MCF 10A (cell line): ENCODE measurements at regions of chr2 and their contacts with region 1.

Region 1: GRCh38 chr2:98835831-98836385 is 100.1 kb downstream of the CRACDL start:
- DNase-seq: no peak
- H3K4me3 Mint-ChIP-seq: no peak overlapping the region
- H3K27ac Mint-ChIP-seq: no peak overlapping the region
- H3K4me1 Mint-ChIP-seq: peaks cover 10% of the 10 kb centered on the region
- H3K27me3 Mint-ChIP-seq: no peaks in the 10 kb centered on the region
- CTCF ChIP-seq: no peak

Region 2: DNA sequence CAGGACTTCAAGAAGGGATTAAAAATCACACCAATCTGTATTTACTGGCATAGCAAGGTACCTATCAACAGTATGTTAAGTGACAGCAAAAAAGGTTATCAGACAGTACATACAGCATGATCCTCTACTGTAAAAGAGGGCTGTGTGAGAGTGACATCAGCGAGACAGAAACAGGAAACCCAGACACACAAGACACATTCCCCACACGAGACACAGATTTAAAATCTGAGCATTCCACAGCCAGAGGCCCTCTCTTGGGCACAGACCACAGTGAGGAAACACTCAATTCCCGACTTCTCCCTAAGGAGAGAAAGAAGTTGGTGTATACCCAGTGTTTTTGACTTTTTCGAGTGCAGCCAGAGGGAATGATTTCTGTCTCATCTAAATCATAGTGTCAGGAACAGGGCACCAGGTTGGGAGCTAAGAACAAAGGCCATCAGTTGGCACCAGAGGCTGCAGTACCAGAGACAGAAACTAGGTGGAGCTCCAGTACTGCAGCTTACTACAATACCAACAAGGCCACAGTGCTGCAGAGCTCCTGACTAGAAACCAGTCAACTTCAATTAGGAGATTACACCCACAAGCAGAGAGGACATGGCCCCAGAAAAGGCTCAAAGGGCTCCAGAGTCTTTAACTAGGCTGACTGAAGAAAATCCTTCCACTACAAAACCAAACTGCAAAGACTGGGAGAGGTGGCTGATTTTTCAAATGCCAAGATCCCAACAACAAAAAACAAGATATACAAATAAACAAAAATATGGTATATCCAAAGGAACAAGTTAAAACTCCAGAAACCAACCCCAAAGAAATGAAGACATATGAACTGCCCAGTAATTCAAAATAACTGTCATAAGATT is 186.5 kb before region 1 on chr2:
- CTCF ChIA-PET with region 1: interaction called, 17 read pairs
- POLR2A ChIA-PET with region 1: interaction called, 4 read pairs
- intact Hi-C with region 1: loop called (anchors 1 kb)
- DNase-seq: peak; percentile 80
- H3K4me3 Mint-ChIP-seq: no peak overlapping the region
- H3K27ac Mint-ChIP-seq: no peak overlapping the region
- H3K4me1 Mint-ChIP-seq: no peaks in the 10 kb centered on the region
- H3K27me3 Mint-ChIP-seq: no peaks in the 10 kb centered on the region
- CTCF ChIP-seq: peak; percentile 97

Region 3: GRCh38 chr2:98656800-98657199 is 179.1 kb before region 1 on chr2:
- CTCF ChIA-PET with region 1: interaction called, 10 read pairs
- POLR2A ChIA-PET with region 1: no interaction called
- intact Hi-C with region 1: no loop called
- DNase-seq: no peak
- H3K4me3 Mint-ChIP-seq: no peak overlapping the region
- H3K27ac Mint-ChIP-seq: no peak overlapping the region
- H3K4me1 Mint-ChIP-seq: no peaks in the 10 kb centered on the region
- H3K27me3 Mint-ChIP-seq: no peaks in the 10 kb centered on the region
- CTCF ChIP-seq: no peak

Region 4: DNA sequence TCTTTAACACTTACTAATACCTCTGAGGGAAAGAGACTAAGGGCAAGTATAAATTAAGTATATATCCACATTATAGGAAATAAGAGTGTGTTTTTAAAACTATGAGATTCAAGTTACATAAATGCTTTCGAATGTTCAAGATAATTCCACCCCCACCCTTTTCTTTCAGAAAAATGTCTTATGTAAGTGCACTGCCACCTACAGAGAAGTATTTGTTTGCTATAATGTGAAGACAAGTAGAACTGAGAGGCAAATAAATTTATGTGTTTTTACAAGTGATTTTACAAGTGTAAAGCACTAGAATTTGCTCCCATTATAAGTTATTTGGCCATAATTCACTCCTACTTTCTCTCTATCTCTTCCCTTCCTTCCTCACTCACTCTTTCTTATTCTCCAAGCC is 200.0 kb after region 1 on chr2:
- CTCF ChIA-PET with region 1: interaction called, 4 read pairs
- POLR2A ChIA-PET with region 1: no interaction called
- intact Hi-C with region 1: loop called (anchors 5 kb)
- DNase-seq: no peak
- H3K4me3 Mint-ChIP-seq: no peak overlapping the region
- H3K27ac Mint-ChIP-seq: peak overlapping the region; percentile 18
- H3K4me1 Mint-ChIP-seq: peaks cover 20% of the 10 kb centered on the region
- H3K27me3 Mint-ChIP-seq: no peaks in the 10 kb centered on the region
- CTCF ChIP-seq: peak; percentile 14